Caco-2 (cell line): ENCODE measurements at regions of chr10 and their contacts with region 1.

Region 1: GRCh38 chr10:110016039-110016438 is 8.3 kb downstream of the ADD3 start:
- DNase-seq: peak in 1 of 2 experiments; percentile 41
- H3K4me3 ChIP-seq: no peak overlapping the region
- H3K4me3 Mint-ChIP-seq: no peak overlapping the region
- H3K27ac Mint-ChIP-seq: no peak overlapping the region
- H3K4me1 ChIP-seq: peaks cover 30% of the 10 kb centered on the region
- H3K4me1 Mint-ChIP-seq: peaks cover 32% of the 10 kb centered on the region
- H3K27me3 ChIP-seq: no peaks in the 10 kb centered on the region
- H3K27me3 Mint-ChIP-seq: no peaks in the 10 kb centered on the region
- CTCF ChIP-seq: peak in 1 of 2 experiments; percentile 51

Region 2: GRCh38 chr10:109956454-109957091 is 59.5 kb before region 1 on chr10:
- CTCF ChIA-PET with region 1: no interaction called
- POLR2A ChIA-PET with region 1: no interaction called
- intact Hi-C with region 1: loop called (anchors 1 kb)
- DNase-seq: peak; percentile 63 to 67
- H3K4me3 ChIP-seq: no peak overlapping the region
- H3K4me3 Mint-ChIP-seq: no peak overlapping the region
- H3K27ac Mint-ChIP-seq: no peak overlapping the region
- H3K4me1 ChIP-seq: peaks cover 6% of the 10 kb centered on the region; the same call in 1 of the 2 replicates
- H3K4me1 Mint-ChIP-seq: peaks cover 19% of the 10 kb centered on the region
- H3K27me3 ChIP-seq: no peaks in the 10 kb centered on the region
- H3K27me3 Mint-ChIP-seq: no peaks in the 10 kb centered on the region
- CTCF ChIP-seq: peak; percentile 75 to 78

Region 3: GRCh38 chr10:110137142-110137545 is 121.1 kb after region 1 on chr10:
- CTCF ChIA-PET with region 1: no interaction called
- POLR2A ChIA-PET with region 1: no interaction called
- intact Hi-C with region 1: no loop called
- DNase-seq: peak in 1 of 2 experiments; percentile 64
- H3K4me3 ChIP-seq: no peak overlapping the region
- H3K4me3 Mint-ChIP-seq: no peak overlapping the region
- H3K27ac Mint-ChIP-seq: no peak overlapping the region
- H3K4me1 ChIP-seq: no peaks in the 10 kb centered on the region
- H3K4me1 Mint-ChIP-seq: peaks cover 9% of the 10 kb centered on the region
- H3K27me3 ChIP-seq: no peaks in the 10 kb centered on the region
- H3K27me3 Mint-ChIP-seq: no peaks in the 10 kb centered on the region
- CTCF ChIP-seq: peak; percentile 67 to 72